Activated B cell treated with CpG ODN at 0.5 μM for 24 hours (primary cell): ENCODE measurements at regions of chr1 and their contacts with region 1.

Region 1: DNA sequence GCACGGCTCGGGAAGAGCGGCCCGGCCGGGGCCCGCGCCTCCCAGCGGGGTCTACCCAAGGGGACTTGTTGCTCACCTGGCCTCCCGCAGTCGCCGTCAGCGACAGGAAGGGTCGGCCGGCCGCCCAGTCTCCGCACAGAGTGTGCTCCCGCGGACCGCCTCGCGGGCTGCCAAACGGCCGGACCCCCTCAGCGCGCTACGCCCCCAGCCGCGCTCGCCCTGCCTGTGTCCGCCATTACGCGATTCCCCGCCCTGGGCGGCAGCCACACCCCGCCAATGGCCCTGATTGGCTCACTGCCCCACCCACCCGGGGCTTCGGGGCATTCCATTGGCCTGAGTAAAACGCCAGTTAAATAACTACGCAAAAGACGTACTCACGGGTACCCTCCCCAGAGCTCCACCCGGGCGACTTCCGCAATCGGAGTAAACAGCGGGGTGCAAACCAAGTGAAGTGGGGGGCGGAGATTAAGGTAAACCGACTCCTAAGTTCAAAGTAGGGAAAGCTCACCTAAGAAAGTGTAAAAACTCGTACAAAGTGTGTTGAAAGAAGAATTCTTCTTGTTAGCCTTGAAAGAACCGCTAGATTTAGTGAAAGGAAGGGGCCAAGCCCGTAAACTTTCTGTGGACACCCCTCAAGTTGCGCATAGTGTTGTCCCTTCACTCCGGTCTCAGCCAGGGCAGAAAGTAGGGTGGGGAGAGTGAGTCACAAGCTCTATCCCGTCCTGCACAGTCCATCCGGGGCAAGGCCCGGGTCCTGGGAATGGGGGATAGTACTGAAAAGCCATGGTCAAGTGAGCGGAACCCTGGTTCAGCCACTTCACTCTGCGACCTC is at the start of gene WASF2:
- DNase-seq: peak; percentile 94
- ATAC-seq: peak; percentile 88
- H3K4me3 Mint-ChIP-seq: peak within 1 kb of the TSS; percentile 95
- H3K27ac Mint-ChIP-seq: peak within 1 kb of the TSS; percentile 100
- H3K4me1 Mint-ChIP-seq: peaks cover 59% of the 10 kb centered on the region
- H3K27me3 Mint-ChIP-seq: no peaks in the 10 kb centered on the region
- CTCF ChIP-seq: no peak
- total RNA-seq, gene WASF2: 136 and 137 TPM in 2 replicates

Region 2: DNA sequence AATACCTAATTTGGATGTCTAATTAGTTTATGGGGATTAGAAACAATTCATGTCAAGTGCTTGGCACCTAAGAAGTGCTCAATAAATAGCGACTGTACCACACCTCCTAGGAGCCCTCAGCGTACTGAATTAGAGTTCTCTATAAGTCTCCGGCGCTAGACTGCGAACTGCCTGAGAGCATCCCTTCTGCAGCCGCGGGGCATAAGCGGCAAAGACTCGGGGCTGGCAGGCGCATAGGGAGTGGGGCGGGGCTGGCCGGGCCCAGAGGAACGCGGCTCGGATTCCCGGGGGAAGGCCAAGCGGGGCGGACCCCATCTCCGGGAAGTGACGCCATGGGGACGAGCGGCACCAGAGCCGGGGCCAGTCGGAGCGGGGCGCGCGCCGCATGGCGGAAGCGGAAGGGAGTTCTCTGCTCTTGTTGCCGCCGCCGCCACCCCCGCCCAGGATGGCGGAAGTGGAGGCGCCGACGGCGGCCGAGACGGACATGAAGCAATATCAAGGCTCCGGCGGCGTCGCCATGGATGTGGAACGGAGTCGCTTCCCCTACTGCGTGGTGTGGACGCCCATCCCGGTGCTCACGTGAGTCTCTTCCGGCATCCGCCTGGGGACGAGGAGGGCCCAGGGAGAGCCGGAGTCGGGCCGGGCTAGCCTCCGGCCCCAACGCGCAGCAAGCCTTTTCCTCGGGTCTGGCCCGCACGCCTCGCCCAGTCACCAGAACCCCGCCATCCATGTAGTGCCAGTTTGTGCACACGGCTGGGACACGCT is 168.1 kb before region 1 on chr1 and contains the start of gene TMEM222:
- CTCF ChIA-PET with region 1: no interaction called
- POLR2A ChIA-PET with region 1: no interaction called
- intact Hi-C with region 1: loop called (anchors 5 kb)
- DNase-seq: peak; percentile 99
- ATAC-seq: peak; percentile 95
- H3K4me3 Mint-ChIP-seq: peak within 1 kb of the TSS; percentile 97
- H3K27ac Mint-ChIP-seq: peak within 1 kb of the TSS; percentile 93
- H3K4me1 Mint-ChIP-seq: peaks cover 51% of the 10 kb centered on the region
- H3K27me3 Mint-ChIP-seq: no peaks in the 10 kb centered on the region
- CTCF ChIP-seq: no peak
- total RNA-seq, gene TMEM222: 39.3 and 43.0 TPM in 2 replicates

Region 3: GRCh38 chr1:27416387-27417111 is 73.6 kb before region 1 on chr1:
- CTCF ChIA-PET with region 1: interaction called, 18 read pairs
- POLR2A ChIA-PET with region 1: interaction called, 15 read pairs
- intact Hi-C with region 1: loop called (anchors 1 kb)
- DNase-seq: no peak
- ATAC-seq: peak; percentile 52
- H3K4me3 Mint-ChIP-seq: peak overlapping the region; percentile 32
- H3K27ac Mint-ChIP-seq: peak overlapping the region; percentile 89
- H3K4me1 Mint-ChIP-seq: peaks cover 55% of the 10 kb centered on the region
- H3K27me3 Mint-ChIP-seq: no peaks in the 10 kb centered on the region
- CTCF ChIP-seq: no peak

Region 4: DNA sequence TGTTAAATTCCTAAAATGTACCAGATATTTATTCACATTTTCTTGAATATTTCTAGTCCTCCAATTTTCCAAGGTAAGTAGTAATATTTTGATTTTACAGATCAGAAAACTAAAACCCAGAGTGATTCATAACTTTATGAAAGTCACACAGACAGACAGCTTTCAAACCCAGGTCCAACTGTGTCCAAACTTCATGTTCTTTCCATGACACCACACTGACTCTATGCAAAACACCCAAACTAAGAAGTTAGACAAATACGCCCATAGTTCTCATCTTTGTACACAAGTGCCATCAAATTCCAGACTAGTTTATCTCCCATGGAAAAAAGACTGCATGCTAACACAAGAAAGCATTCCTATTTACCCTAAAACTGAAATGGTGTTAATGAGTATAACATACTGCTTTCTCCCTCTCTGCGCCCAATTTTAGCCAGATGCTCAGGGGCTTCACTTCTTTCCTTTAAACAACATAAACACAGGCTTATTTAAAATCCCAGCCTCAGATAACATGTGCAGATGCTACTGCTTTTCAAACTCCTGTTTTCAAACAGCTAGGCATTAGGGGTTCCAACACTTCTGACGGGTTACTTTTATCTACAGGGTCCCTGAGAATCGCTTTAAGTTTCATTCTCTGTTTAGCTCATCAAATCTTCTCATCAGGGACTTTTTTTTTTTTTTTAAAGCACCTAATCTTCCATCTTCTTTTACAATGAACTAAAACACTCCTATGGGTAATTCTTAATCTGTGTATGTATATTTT is 44.8 kb before region 1 on chr1:
- CTCF ChIA-PET with region 1: no interaction called
- POLR2A ChIA-PET with region 1: interaction called, 11 read pairs
- intact Hi-C with region 1: no loop called
- DNase-seq: no peak
- ATAC-seq: peak; percentile 47
- H3K4me3 Mint-ChIP-seq: peak overlapping the region; percentile 66
- H3K27ac Mint-ChIP-seq: peak overlapping the region; percentile 82
- H3K4me1 Mint-ChIP-seq: peaks cover 60% of the 10 kb centered on the region
- H3K27me3 Mint-ChIP-seq: no peaks in the 10 kb centered on the region
- CTCF ChIP-seq: no peak

Region 5: DNA sequence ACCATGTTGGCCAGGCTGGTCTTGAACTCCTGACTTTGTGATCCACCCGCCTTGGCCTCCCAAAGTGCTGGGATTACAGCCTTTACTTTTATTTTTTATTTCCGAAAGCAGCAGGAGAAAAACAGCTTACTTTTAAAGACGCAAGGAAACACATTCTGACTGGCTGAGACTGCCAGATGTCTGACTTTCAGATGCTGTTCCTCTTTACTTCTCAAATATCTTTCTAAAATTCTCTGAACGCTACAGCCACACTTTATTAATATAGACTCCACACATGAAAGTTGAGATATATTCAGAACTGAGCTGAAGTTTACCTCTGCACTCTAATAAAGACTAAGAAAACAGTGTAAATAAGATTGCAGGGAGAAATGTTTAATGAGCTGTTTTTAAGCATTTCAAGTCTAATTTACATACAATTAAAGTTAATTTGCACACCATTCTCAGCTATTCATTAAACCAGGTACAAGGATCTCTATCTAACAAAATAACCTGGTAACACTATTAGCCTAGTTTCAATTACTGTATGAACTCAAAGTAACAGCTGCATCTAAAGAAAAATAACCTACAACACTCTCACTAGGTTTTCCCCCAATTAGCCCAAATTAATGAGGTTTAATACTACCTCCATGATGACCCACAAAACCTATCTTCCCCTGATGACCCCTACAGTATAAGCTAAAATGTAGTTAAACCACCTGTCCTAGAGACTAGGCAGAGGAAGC is 25.0 kb before region 1 on chr1:
- CTCF ChIA-PET with region 1: no interaction called
- POLR2A ChIA-PET with region 1: interaction called, 10 read pairs
- intact Hi-C with region 1: no loop called
- DNase-seq: no peak
- ATAC-seq: no peak
- H3K4me3 Mint-ChIP-seq: no peak overlapping the region
- H3K27ac Mint-ChIP-seq: peak overlapping the region; percentile 56
- H3K4me1 Mint-ChIP-seq: peaks cover 57% of the 10 kb centered on the region
- H3K27me3 Mint-ChIP-seq: no peaks in the 10 kb centered on the region
- CTCF ChIP-seq: no peak

Region 6: GRCh38 chr1:27525296-27526272 is 35.5 kb after region 1 on chr1:
- CTCF ChIA-PET with region 1: interaction called, 8 read pairs
- POLR2A ChIA-PET with region 1: interaction called, 10 read pairs
- intact Hi-C with region 1: loop called (anchors 1 kb)
- DNase-seq: peak; percentile 51
- ATAC-seq: peak; percentile 64
- H3K4me3 Mint-ChIP-seq: peak overlapping the region; percentile 41
- H3K27ac Mint-ChIP-seq: peak overlapping the region; percentile 79
- H3K4me1 Mint-ChIP-seq: peaks cover 76% of the 10 kb centered on the region
- H3K27me3 Mint-ChIP-seq: no peaks in the 10 kb centered on the region
- CTCF ChIP-seq: no peak

Region 7: GRCh38 chr1:28359592-28360239 is 869.6 kb after region 1 on chr1:
- CTCF ChIA-PET with region 1: no interaction called
- POLR2A ChIA-PET with region 1: interaction called, 11 read pairs
- intact Hi-C with region 1: no loop called
- DNase-seq: peak; percentile 50
- ATAC-seq: peak; percentile 75
- H3K4me3 Mint-ChIP-seq: no peak overlapping the region
- H3K27ac Mint-ChIP-seq: no peak overlapping the region
- H3K4me1 Mint-ChIP-seq: peaks cover 2% of the 10 kb centered on the region
- H3K27me3 Mint-ChIP-seq: no peaks in the 10 kb centered on the region
- CTCF ChIP-seq: peak; percentile 91